ENCODE measurements at regions of chr1 and their contacts with region 1.

Region 1: GRCh38 chr1:231357831-231358354 is 19.8 kb downstream of the SPRTN start:
- DNase-seq: no peak
- ATAC-seq: peak; percentile 77

Region 2: DNA sequence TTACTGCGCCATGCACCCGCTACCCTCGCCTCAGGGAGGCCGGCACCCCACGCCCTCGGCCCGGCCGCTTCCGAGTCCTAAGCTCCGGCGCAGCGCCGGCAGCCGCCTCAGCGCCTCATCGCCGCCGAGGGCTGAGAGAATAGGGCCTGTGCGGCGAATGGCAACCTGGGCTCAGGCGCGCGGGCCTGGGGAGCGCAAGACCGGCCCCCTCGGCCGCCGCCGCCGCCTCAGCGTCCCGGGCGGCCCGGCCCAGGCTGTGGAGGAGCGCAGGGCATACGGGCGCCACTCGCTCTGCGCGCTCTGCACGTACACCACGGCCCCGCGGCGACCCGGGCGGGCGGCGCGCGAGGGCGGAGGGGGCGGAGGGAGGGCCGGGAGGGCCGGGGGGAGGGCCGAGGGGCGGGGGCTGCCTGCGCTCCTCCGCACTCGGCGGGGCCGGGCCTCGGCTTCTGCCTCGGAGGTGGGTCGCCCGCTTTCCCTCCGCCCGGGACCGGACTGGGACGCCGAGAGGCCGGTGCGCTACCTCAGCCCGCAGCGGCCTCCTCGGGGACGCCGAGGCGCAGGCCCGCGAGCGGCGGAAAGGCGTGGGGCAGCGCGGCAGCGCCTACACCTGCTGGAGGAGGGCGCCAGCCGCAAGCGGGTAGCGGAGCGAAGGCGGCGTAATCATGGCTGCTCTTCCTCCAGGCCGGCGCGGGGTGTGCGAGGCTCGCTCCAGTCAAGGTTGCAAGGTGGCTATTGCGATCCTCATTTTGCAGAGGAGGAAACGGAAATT is 64.3 kb after region 1 on chr1 and contains the start of gene EGLN1:
- intact Hi-C with region 1: loop called (anchors 5 kb)
- DNase-seq: peak; percentile 91
- ATAC-seq: peak; percentile 91
- total RNA-seq, gene EGLN1: 75.2 TPM

Region 3: GRCh38 chr1:231590453-231591198 is 232.7 kb after region 1 on chr1:
- intact Hi-C with region 1: loop called (anchors 5 kb)
- DNase-seq: peak; percentile 58
- ATAC-seq: peak; percentile 95

Region 4: DNA sequence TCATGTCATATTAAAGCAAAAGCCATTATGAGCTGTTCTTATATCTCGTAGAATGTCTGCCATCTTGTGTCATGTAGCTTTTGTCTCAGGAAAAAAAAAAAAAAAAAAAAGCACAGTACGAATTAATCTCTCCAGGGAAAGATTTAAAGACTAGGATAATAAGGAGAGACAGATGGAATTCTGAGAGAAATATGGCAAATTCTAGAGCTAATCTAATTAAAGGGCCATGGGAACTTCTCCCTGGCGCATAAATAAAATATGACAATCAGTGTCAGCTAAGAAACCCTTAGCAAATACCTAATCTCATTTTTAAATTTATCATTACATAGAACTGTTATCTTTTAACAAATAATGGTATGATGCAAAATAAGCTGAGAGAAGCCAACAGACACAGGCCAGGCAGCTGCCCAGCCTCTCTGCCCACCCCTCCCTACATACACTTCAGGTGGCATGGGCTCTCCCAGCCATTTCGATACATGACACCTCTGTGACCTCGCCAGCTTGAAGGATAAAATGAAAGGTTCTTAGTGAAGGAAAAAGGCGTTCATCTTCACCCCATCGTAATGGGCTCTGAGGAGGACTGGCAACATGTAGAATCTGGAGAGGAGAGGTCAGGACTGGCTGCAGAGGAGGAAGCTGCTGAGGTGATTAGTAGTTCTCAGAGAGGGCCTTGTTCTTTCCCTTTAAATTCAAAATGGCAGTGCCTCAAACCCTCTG is 308.5 kb after region 1 on chr1:
- intact Hi-C with region 1: no loop called
- DNase-seq: no peak
- ATAC-seq: no peak